Psoas muscle (tissue), 8 donors: ENCODE measurements at regions of chr18 and their contacts with region 1.

Region 1: DNA sequence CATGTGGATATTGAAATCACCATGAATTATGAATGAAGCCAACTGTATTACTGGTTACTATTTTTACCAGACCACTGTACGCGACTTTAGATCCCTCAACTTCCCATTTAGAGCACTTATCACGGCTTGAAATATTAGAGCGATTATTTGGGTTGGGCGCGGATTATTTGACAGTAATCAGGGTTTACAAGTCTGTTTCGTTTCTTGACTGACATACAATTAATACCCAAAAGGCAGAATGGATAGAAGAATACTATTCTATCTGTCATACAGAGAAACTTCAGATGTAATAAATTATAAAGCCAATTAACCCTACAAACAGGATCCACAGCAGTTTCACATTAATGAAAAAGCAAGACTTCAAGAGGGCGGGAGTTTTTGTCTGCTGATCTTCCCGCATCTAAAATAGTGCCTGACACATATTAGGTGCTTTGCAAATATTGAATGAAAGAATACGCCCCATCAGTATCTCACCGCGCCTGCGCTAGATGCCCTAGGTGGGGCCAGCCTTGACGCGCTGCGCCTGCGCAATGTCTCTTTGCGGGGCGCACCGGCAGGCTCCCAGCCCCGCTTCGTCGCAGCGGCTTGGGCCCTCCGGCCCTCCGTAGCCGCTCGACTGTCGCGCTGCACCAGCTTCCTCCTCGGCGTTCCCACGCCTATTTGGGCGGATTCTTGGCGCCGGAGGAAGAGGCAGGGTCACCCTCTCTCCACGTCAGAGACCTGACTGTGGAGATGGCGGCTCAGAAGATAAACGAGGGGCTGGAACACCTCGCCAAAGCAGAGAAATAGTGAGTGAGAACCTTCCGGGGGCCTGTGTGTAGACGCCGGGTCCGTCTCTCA is at the start of gene NAPG:
- DNase-seq: peak; percentile 93 to 96
- ATAC-seq: peak; percentile 97 to 98 (median 98)
- H3K4me3 ChIP-seq: peak within 1 kb of the TSS; percentile 91
- H3K27ac ChIP-seq: peak within 1 kb of the TSS; percentile 94
- H3K4me1 ChIP-seq: peaks cover 32% of the 10 kb centered on the region
- H3K27me3 ChIP-seq: no peaks in the 10 kb centered on the region
- CTCF ChIP-seq: no peak
- total RNA-seq, gene NAPG: 13.9 to 23.8 (median 18.4) TPM

Region 2: GRCh38 chr18:9808295-9809241 is 717.0 kb before region 1 on chr18:
- intact Hi-C with region 1: loop called in 1 of 2 experiments (anchors 10 kb)
- DNase-seq: peak in 1 of 2 donors; percentile 59
- ATAC-seq: peak in 3 of 4 donors; percentile 16 to 25 (median 20)
- H3K4me3 ChIP-seq: no peak overlapping the region
- H3K27ac ChIP-seq: no peak overlapping the region
- H3K4me1 ChIP-seq: peaks cover 38% of the 10 kb centered on the region
- H3K27me3 ChIP-seq: no peaks in the 10 kb centered on the region
- CTCF ChIP-seq: no peak

Region 3: GRCh38 chr18:10490401-10491165 is 35.0 kb before region 1 on chr18:
- intact Hi-C with region 1: no loop called
- DNase-seq: no peak
- ATAC-seq: peak in 1 of 4 donors; percentile 80
- H3K4me3 ChIP-seq: no peak overlapping the region
- H3K27ac ChIP-seq: no peak overlapping the region
- H3K4me1 ChIP-seq: no peaks in the 10 kb centered on the region
- H3K27me3 ChIP-seq: peaks cover 0 to 2% (median 0%) of the 10 kb centered on the region in 3 donors
- CTCF ChIP-seq: no peak